PC-9 (cell line): ENCODE measurements at regions of chrX and their contacts with region 1.

Region 1: DNA sequence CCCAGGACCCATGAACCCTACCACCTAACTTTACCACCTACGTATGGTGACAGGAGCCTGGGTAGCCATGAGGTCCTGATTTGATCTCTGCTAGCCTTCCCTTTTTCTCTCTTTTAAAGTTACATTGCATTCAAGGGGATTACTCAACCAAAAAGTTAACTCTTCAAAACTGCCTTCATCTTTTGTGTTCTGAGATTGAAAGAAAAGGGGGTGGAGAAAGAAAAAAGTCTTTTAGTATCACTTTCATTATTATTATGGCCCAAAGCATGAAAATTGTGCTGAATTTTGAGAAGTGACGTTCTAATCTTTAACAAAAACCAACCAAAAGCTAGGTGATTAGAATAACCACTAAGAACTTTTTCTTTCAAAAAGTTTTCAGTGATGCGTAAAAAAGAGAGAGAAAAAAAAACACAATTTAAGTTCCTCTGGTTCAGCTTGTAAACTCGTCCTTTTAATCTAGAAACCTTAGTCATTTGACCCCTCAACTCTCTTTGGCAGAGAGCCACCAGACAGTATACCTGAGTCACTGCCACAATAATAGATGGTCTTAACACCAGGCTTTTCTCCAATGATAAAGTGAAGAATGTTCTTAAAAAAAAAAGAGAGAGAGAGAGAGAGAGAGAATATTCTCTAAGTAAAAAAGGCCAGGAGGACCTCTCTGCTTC is 347.4 kb upstream of the FGF13 start:
- DNase-seq: peak; percentile 35 to 73
- H3K4me3 ChIP-seq: peak overlapping the region; percentile 3; the same call in 1 of the 2 replicates
- H3K27ac ChIP-seq: peak overlapping the region; percentile 48; the same call in 1 of the 2 replicates
- H3K4me1 ChIP-seq: peaks cover 22% of the 10 kb centered on the region
- H3K27me3 ChIP-seq: no peaks in the 10 kb centered on the region
- CTCF ChIP-seq: no peak

Region 2: DNA sequence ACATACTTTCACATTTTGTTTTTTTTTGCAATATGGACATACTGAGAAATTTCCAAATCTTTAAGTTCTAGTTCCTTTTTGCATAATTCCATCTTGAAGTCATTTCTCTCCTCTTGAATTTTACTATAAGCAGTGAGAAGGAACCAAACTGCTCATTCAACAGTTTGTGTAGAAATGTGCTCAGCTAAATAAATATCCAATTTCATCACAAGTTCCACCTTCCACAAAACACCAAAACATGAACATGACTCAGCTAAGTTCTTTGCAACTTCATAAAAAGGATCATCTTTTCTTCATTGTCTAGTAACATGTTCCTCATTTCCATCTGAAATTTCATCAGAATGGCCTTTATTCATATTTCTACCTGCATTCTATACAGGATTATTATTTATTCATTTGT is 270.2 kb before region 1 on chrX:
- CTCF ChIA-PET with region 1: no interaction called
- POLR2A ChIA-PET with region 1: no interaction called
- intact Hi-C with region 1: no loop called
- DNase-seq: no peak
- H3K4me3 ChIP-seq: no peak overlapping the region
- H3K27ac ChIP-seq: no peak overlapping the region
- H3K4me1 ChIP-seq: peaks cover 14% of the 10 kb centered on the region
- H3K27me3 ChIP-seq: no peaks in the 10 kb centered on the region
- CTCF ChIP-seq: no peak

Region 3: GRCh38 chrX:138847928-138848327 is 211.0 kb before region 1 on chrX:
- CTCF ChIA-PET with region 1: no interaction called
- POLR2A ChIA-PET with region 1: no interaction called
- intact Hi-C with region 1: loop called (anchors 5 kb)
- DNase-seq: peak in 1 of 2 experiments; percentile 3
- H3K4me3 ChIP-seq: no peak overlapping the region
- H3K27ac ChIP-seq: no peak overlapping the region
- H3K4me1 ChIP-seq: no peaks in the 10 kb centered on the region
- H3K27me3 ChIP-seq: no peaks in the 10 kb centered on the region
- CTCF ChIP-seq: peak; percentile 61

Region 4: DNA sequence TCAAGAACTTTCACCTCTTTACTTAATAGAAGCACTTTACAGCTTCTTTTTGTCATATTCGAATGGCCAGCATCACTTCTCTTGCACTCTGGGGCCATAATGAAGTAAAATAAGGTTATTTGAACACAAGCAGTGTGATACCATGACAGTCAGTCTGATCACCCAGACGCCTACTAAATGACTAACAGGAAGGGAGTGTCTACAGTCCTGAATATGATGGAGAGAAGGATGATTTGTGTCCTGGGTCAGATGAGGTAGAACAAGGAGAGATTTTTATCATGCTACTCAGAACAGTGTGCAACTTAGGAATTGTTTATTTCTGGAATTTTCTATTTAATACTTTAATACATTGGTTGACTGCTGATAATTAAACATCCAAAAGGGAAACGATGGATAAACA is 187.3 kb after region 1 on chrX:
- CTCF ChIA-PET with region 1: no interaction called
- POLR2A ChIA-PET with region 1: no interaction called
- intact Hi-C with region 1: no loop called
- DNase-seq: no peak
- H3K4me3 ChIP-seq: no peak overlapping the region
- H3K27ac ChIP-seq: no peak overlapping the region
- H3K4me1 ChIP-seq: no peaks in the 10 kb centered on the region
- H3K27me3 ChIP-seq: no peaks in the 10 kb centered on the region
- CTCF ChIP-seq: no peak

Region 5: GRCh38 chrX:139759637-139760036 is 700.7 kb after region 1 on chrX:
- CTCF ChIA-PET with region 1: no interaction called
- POLR2A ChIA-PET with region 1: no interaction called
- intact Hi-C with region 1: no loop called
- DNase-seq: peak in 1 of 2 experiments; percentile 0
- H3K4me3 ChIP-seq: no peak overlapping the region
- H3K27ac ChIP-seq: no peak overlapping the region
- H3K4me1 ChIP-seq: no peaks in the 10 kb centered on the region
- H3K27me3 ChIP-seq: no peaks in the 10 kb centered on the region
- CTCF ChIP-seq: peak; percentile 60